Left cardiac atrium (tissue), 4 donors: ENCODE measurements at regions of chr11 and their contacts with region 1.

Region 1: DNA sequence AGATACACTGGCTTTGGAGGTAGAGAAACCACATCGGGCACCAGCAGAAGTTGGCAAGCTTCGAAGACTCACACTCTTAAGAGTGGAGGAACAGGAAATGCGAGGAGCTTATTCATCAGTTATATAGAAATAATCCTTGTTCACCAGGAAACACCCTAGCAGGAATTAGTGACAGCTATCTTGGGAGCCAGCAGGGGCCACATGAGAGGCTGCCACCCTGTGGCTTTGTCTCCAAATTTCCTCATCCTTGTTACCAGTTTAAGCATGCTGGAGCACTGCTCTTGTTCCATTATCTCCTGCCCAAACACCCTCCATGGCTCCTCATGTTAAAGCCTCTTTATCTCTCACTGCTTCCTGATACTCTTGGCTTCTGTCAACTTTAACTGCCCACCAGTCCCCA is 131.0 kb downstream of the PLEKHA7 start:
- DNase-seq: peak; percentile 34
- ATAC-seq: peak; percentile 35 to 41

Region 2: GRCh38 chr11:16785520-16786128 is 97.5 kb before region 1 on chr11:
- intact Hi-C with region 1: loop called in 1 of 2 experiments (anchors 2 kb)
- DNase-seq: peak; percentile 66
- ATAC-seq: peak; percentile 62 to 76

Region 3: GRCh38 chr11:16820324-16821092 is 62.7 kb before region 1 on chr11:
- intact Hi-C with region 1: loop called in 1 of 2 experiments (anchors 2 kb)
- DNase-seq: peak; percentile 84
- ATAC-seq: peak; percentile 69 to 77